Ovary (tissue), 10 donors: ENCODE measurements at regions of chr5 and their contacts with region 1.

Region 1: DNA sequence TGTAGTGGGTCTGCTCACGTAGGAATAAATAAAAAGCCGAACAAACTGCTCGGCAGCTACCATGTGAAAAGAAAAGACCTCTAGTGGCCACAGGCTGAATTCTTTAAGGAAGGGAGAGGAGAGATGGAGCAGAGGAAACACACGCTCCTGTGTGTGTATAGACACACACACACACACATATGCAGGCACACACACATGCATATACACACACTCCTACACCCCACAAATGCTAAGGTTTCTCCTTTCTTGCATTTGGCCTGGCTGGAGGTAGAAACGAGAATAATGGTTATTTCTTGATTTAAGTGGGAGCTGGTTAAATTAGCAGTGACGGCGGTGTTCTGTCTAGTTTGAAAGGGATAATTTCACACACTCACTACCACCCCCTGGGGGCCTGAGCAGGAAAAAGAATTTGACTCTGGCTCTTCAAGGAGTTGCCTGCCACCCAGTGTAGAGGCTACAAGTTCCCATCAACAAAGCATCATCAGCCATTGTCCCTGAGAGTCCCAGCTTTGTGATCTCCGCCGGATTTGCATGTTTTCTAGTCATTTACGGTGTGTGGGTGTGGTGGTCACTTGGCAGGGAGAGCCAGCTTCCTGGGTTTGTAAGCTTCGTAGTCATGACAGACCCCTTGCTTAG is at the start of gene INSYN2B:
- DNase-seq: peak; percentile 59 to 80 (median 68)
- H3K4me3 ChIP-seq: no peak within 1 kb of the TSS
- H3K27ac ChIP-seq: no peak within 1 kb of the TSS
- H3K4me1 ChIP-seq: no peaks in the 10 kb centered on the region
- H3K27me3 ChIP-seq: no peaks in the 10 kb centered on the region
- CTCF ChIP-seq: peak; percentile 23 to 80 (median 75)
- EP300 ChIP-seq: no peak
- POLR2A ChIP-seq: no peak
- total RNA-seq, gene INSYN2B: 0.68 to 3.3 (median 1.2) TPM in 6 of 7 donors, not detected in the other

Region 2: GRCh38 chr5:169701910-169702451 is 278.6 kb before region 1 on chr5:
- intact Hi-C with region 1: loop called in 3 of 4 experiments (anchors 1 to 5 kb)
- DNase-seq: no peak
- H3K4me3 ChIP-seq: no peak overlapping the region
- H3K27ac ChIP-seq: no peak overlapping the region
- H3K4me1 ChIP-seq: no peaks in the 10 kb centered on the region
- H3K27me3 ChIP-seq: no peaks in the 10 kb centered on the region
- CTCF ChIP-seq: peak in 1 of 3 donors; percentile 52
- EP300 ChIP-seq: no peak
- POLR2A ChIP-seq: no peak